ENCODE measurements at regions of chr19 and their contacts with region 1.

Region 1: DNA sequence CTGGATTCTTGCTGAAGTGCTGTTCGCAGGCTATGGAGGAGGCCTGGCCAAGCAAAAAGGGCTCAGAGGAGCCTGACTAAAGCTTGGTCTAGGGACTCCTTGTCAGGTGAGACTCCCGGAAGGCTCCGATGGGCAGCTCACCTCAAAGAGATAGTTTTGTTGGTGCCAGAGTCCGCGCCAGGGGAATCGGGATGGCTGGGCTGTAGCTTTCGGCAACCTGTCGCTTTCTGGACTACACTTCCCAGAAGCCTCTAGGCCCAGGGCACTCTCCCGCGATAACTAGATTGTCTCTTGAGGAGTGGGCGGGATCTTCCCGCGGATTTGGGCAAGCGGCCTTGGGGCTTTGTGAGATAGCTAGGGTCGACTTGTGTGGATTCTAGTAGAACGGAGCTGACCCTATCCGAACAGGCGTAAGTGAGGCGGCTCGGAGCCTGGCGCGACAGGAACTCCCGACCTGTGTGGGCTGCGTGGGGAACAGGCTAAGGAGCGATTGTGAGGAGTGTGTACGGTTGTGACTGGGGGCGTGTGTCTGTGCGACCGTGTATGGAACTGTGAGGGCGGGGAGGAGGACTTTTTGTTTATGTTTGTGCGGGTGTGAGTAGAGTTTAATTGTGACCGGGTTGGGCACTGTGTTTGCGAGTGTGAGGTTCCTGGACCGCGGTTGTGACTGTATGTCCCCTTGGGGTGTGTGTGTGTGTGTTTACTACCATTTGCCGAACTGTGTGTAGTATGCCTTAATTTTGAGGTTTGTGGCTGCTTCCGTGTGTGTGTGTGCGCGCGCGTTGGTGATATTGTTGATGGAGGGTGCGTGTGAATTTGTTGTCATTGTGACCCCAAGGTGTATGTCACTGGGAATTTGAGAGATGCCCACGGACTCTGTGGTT is at the start of gene ZNF345:
- DNase-seq: peak; percentile 84 to 90
- H3K4me3 ChIP-seq: peak within 1 kb of the TSS; percentile 98
- H3K27ac ChIP-seq: 0 out of 2 replicates have a peak within 1 kb of the TSS, but pooled peaks have one; percentile 1
- H3K4me1 ChIP-seq: peaks cover 11% of the 10 kb centered on the region; the same call in 1 of the 2 replicates
- H3K27me3 ChIP-seq: no peaks in the 10 kb centered on the region
- CTCF ChIP-seq: no peak
- total RNA-seq, gene ZNF345: 7.1 and 8.2 TPM in 2 replicates

Region 2: DNA sequence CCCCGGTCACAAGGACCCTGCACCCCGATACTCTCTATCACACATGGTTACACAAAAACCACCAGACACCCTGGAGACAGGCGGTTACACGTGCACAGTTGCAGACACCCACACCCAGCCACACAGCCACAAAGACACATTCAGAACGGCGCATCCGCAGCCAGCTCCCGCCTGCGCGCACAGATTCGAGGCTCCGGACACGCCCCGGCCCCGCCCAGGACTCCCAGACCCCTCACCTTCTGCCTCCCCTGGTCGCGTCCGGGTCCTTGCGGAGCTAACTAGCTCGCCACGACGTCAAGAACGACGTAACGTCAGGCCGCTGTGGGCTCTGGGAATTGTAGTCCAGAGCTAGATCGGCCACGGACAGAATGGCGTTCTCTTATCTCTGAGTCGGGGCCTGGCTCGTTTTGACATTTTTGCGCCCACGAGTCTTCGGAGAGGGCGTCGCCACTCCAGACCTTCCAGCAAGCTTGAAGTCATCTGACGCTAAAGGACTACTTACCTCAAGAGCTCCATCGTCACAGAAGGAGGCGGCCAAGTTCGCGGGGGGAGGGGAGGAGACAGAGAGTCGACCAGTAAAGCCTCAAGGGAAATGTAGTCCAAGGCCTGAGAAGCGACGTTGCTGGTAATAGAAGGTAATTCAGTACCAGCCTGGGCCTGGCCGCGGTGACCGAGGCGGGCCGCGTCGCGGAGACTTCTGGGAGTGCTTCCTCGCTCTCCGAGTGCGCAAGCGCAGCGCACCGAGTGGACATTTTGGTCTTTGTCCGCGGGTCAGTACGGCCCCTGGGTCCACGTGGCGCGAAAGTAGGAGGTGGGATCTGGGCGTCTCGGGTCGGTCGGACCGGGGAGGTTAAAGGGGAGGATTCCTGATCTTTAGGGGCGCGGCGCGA is 636.2 kb before region 1 on chr19 and contains the starts of genes ZNF146 and ZNF565:
- CTCF ChIA-PET with region 1: no interaction called
- POLR2A ChIA-PET with region 1: interaction called, 6 read pairs
- intact Hi-C with region 1: loop called (anchors 1 kb)
- DNase-seq: peak; percentile 95
- H3K4me3 ChIP-seq: peak within 1 kb of the TSS; percentile 70
- H3K27ac ChIP-seq: peak within 1 kb of the TSS; percentile 57
- H3K4me1 ChIP-seq: peaks cover 5% of the 10 kb centered on the region
- H3K27me3 ChIP-seq: no peaks in the 10 kb centered on the region
- CTCF ChIP-seq: no peak
- total RNA-seq, gene ZNF146: 53.1 and 68.0 TPM in 2 replicates
- total RNA-seq, gene ZNF565: 3.3 and 4.3 TPM in 2 replicates

Region 3: DNA sequence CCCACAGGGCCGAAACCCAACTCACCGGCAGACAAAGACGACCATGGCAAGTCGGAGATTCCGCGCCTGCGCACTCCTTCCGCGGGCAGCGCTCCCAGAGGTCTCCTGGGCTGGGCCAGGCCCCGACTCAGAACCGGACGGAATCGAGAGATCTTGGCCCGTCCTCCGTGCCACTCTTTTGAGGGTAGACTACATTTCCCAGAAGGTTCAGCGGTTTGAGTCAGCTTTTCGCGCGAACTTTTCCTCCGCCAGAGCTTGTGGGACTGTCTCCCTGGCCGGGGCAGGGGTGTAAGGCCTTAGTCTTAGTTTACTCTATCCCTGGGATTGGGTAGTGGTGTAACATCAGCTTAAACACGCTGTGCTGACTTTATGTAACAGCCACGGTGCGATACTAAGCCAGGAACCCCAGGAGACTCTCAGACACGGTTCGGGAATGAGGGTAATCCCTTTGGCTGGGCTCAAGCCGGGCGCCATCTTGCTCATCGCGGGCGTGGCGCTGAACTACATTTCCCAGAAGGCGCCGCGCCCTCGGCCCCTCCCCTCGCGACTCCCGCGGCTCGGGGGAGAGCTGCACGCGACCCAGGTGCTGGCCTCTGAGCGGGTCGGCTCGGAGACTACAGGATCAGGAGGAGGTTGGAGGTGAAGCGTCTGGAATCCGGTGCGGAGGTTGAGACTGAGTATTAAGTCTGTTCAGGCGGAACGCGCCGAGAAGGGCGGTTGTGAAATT is 322.4 kb before region 1 on chr19 and contains the start of gene ZNF260:
- CTCF ChIA-PET with region 1: no interaction called
- POLR2A ChIA-PET with region 1: interaction called, 8 read pairs
- intact Hi-C with region 1: loop called (anchors 1 kb)
- DNase-seq: peak; percentile 86 to 92
- H3K4me3 ChIP-seq: peak within 1 kb of the TSS; percentile 80
- H3K27ac ChIP-seq: peak within 1 kb of the TSS; percentile 74
- H3K4me1 ChIP-seq: peaks cover 6% of the 10 kb centered on the region; the same call in 1 of the 2 replicates
- H3K27me3 ChIP-seq: no peaks in the 10 kb centered on the region
- CTCF ChIP-seq: no peak
- total RNA-seq, gene ZNF260: 9.4 and 10.6 TPM in 2 replicates

Region 4: GRCh38 chr19:36687214-36688056 is 163.4 kb before region 1 on chr19 and contains the start of gene ZNF567:
- CTCF ChIA-PET with region 1: no interaction called
- POLR2A ChIA-PET with region 1: no interaction called
- intact Hi-C with region 1: loop called (anchors 1 kb)
- DNase-seq: peak; percentile 89 to 98
- H3K4me3 ChIP-seq: peak within 1 kb of the TSS; percentile 82
- H3K27ac ChIP-seq: peak within 1 kb of the TSS; percentile 38
- H3K4me1 ChIP-seq: no peaks in the 10 kb centered on the region; the same call in 1 of the 2 replicates
- H3K27me3 ChIP-seq: no peaks in the 10 kb centered on the region
- CTCF ChIP-seq: no peak
- total RNA-seq, gene ZNF567: 7.0 and 7.9 TPM in 2 replicates

Region 5: GRCh38 chr19:36837906-36838783 is 12.7 kb before region 1 on chr19 and contains the start of gene ZNF790:
- CTCF ChIA-PET with region 1: interaction called, 3 read pairs
- POLR2A ChIA-PET with region 1: interaction called, 13 read pairs
- intact Hi-C with region 1: loop called (anchors 1 kb)
- DNase-seq: peak; percentile 80 to 82
- H3K4me3 ChIP-seq: peak within 1 kb of the TSS; percentile 74
- H3K27ac ChIP-seq: no peak within 1 kb of the TSS
- H3K4me1 ChIP-seq: no peaks in the 10 kb centered on the region
- H3K27me3 ChIP-seq: no peaks in the 10 kb centered on the region
- CTCF ChIP-seq: no peak
- total RNA-seq, gene ZNF790: 5.0 and 5.9 TPM in 2 replicates

Region 6: DNA sequence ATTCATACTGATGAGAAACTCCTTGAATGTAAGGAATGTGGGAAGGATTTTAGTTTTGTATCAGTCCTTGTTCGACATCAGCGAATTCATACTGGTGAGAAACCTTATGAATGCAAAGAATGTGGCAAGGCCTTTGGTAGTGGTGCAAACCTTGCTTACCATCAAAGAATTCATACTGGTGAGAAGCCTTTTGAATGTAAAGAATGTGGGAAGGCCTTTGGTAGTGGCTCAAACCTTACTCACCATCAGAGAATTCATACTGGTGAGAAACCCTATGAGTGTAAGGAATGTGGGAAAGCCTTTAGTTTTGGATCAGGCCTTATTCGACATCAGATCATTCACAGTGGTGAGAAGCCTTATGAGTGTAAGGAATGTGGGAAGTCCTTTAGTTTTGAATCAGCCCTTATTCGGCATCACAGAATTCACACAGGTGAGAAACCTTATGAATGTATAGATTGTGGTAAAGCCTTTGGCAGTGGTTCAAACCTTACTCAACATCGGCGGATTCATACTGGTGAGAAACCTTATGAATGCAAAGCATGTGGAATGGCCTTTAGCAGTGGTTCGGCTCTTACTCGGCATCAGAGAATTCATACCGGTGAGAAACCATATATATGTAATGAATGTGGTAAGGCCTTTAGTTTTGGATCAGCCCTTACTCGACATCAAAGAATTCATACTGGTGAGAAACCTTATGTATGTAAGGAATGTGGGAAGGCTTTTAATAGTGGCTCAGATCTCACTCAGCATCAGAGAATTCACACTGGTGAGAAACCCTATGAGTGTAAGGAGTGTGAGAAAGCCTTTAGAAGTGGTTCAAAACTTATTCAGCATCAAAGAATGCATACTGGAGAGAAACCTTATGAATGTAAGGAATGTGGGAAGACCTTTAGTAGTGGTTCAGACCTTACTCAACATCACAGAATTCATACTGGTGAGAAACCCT is 26.5 kb after region 1 on chr19:
- CTCF ChIA-PET with region 1: no interaction called
- POLR2A ChIA-PET with region 1: no interaction called
- intact Hi-C with region 1: no loop called
- DNase-seq: no peak
- H3K4me3 ChIP-seq: no peak overlapping the region
- H3K27ac ChIP-seq: no peak overlapping the region
- H3K4me1 ChIP-seq: no peaks in the 10 kb centered on the region
- H3K27me3 ChIP-seq: no peaks in the 10 kb centered on the region
- CTCF ChIP-seq: no peak

Region 7: GRCh38 chr19:36986601-36987000 is 135.8 kb after region 1 on chr19:
- CTCF ChIA-PET with region 1: no interaction called
- POLR2A ChIA-PET with region 1: no interaction called
- intact Hi-C with region 1: no loop called
- DNase-seq: no peak
- H3K4me3 ChIP-seq: no peak overlapping the region
- H3K27ac ChIP-seq: no peak overlapping the region
- H3K4me1 ChIP-seq: no peaks in the 10 kb centered on the region
- H3K27me3 ChIP-seq: no peaks in the 10 kb centered on the region
- CTCF ChIP-seq: no peak

Region 8: GRCh38 chr19:37077934-37078725 is 227.3 kb after region 1 on chr19 and contains the start of gene ZNF420:
- CTCF ChIA-PET with region 1: no interaction called
- POLR2A ChIA-PET with region 1: no interaction called
- intact Hi-C with region 1: loop called (anchors 1 kb)
- DNase-seq: peak; percentile 90 to 94
- H3K4me3 ChIP-seq: peak within 1 kb of the TSS; percentile 96
- H3K27ac ChIP-seq: peak within 1 kb of the TSS; percentile 27
- H3K4me1 ChIP-seq: peaks cover 7% of the 10 kb centered on the region
- H3K27me3 ChIP-seq: no peaks in the 10 kb centered on the region
- CTCF ChIP-seq: no peak
- total RNA-seq, gene ZNF420: 4.7 and 8.7 TPM in 2 replicates

Region 9: GRCh38 chr19:37779127-37780005 is 928.6 kb after region 1 on chr19 and contains the start of gene ZNF573:
- CTCF ChIA-PET with region 1: no interaction called
- POLR2A ChIA-PET with region 1: interaction called, 23 read pairs
- intact Hi-C with region 1: no loop called
- DNase-seq: peak; percentile 77 to 82
- H3K4me3 ChIP-seq: peak within 1 kb of the TSS; percentile 73
- H3K27ac ChIP-seq: peak within 1 kb of the TSS; percentile 35
- H3K4me1 ChIP-seq: peaks cover 4% of the 10 kb centered on the region; the same call in 1 of the 2 replicates
- H3K27me3 ChIP-seq: no peaks in the 10 kb centered on the region
- CTCF ChIP-seq: no peak
- total RNA-seq, gene ZNF573: 5.5 and 7.9 TPM in 2 replicates